GM18951 (cell line): ENCODE measurements at regions of chr1 and their contacts with region 1.

Region 1: GRCh38 chr1:154183045-154183915 is 8.6 kb downstream of the TPM3 start:
- POLR2A ChIP-seq: peak; percentile 98

Region 2: GRCh38 chr1:154272217-154272998 is 89.1 kb after region 1 on chr1 and contains the start of gene HAX1:
- in situ Hi-C with region 1: loop called (anchors 10 kb)
- POLR2A ChIP-seq: peak; percentile 90